ENCODE measurements at regions of chr16 and their contacts with region 1.

Region 1: GRCh38 chr16:77675464-77676324 is 46.6 kb upstream of the NUDT7 start:
- DNase-seq: peak; percentile 74
- ATAC-seq: peak; percentile 57
- H3K4me3 ChIP-seq: no peak overlapping the region
- H3K4me3 Mint-ChIP-seq: no peak overlapping the region
- H3K27ac ChIP-seq: no peak overlapping the region
- H3K27ac Mint-ChIP-seq: no peak overlapping the region
- H3K4me1 ChIP-seq: peaks cover 0 to 3% of the 10 kb centered on the region in 2 donors
- H3K4me1 Mint-ChIP-seq: peaks cover 6% of the 10 kb centered on the region
- H3K27me3 ChIP-seq: no peaks in the 10 kb centered on the region
- H3K27me3 Mint-ChIP-seq: no peaks in the 10 kb centered on the region
- CTCF ChIP-seq: peak; percentile 95

Region 2: GRCh38 chr16:77556201-77556873 is 119.4 kb before region 1 on chr16:
- CTCF ChIA-PET with region 1: no interaction called
- POLR2A ChIA-PET with region 1: no interaction called
- intact Hi-C with region 1: no loop called
- DNase-seq: no peak
- ATAC-seq: no peak
- H3K4me3 ChIP-seq: no peak overlapping the region
- H3K4me3 Mint-ChIP-seq: no peak overlapping the region
- H3K27ac ChIP-seq: no peak overlapping the region
- H3K27ac Mint-ChIP-seq: no peak overlapping the region
- H3K4me1 ChIP-seq: no peaks in the 10 kb centered on the region
- H3K4me1 Mint-ChIP-seq: no peaks in the 10 kb centered on the region
- H3K27me3 ChIP-seq: peaks cover 0 to 2% (median 0%) of the 10 kb centered on the region in 4 experiments
- H3K27me3 Mint-ChIP-seq: peaks cover 12% of the 10 kb centered on the region
- CTCF ChIP-seq: no peak

Region 3: DNA sequence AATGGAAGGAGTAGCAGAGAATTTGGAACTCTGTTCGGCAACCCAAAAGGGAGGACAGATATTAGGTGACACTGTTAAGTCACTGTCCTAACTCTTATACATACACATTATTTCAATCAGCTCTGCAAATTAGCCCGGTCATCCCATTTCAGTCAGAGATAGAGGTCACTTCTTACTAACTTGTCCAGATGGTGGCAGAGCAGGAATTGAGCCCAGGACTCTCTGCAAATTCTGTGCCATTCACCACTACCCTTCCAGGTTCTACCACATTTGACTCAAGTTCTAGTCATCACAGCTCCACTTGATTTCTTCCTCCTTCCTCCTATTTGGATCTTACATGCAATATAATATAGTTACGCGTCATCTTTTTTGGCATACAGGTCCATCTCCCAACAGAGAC is 10.7 kb after region 1 on chr16:
- CTCF ChIA-PET with region 1: interaction called, 15 read pairs
- POLR2A ChIA-PET with region 1: no interaction called
- intact Hi-C with region 1: no loop called
- DNase-seq: no peak
- ATAC-seq: no peak
- H3K4me3 ChIP-seq: no peak overlapping the region
- H3K4me3 Mint-ChIP-seq: no peak overlapping the region
- H3K27ac ChIP-seq: no peak overlapping the region
- H3K27ac Mint-ChIP-seq: no peak overlapping the region
- H3K4me1 ChIP-seq: no peaks in the 10 kb centered on the region
- H3K4me1 Mint-ChIP-seq: no peaks in the 10 kb centered on the region
- H3K27me3 ChIP-seq: no peaks in the 10 kb centered on the region
- H3K27me3 Mint-ChIP-seq: peaks cover 21% of the 10 kb centered on the region
- CTCF ChIP-seq: no peak

Region 4: GRCh38 chr16:77722309-77723107 is 46.8 kb after region 1 on chr16 and contains the start of gene NUDT7:
- CTCF ChIA-PET with region 1: interaction called, 4 read pairs
- POLR2A ChIA-PET with region 1: no interaction called
- intact Hi-C with region 1: loop called (anchors 1 kb)
- DNase-seq: peak; percentile 96
- ATAC-seq: peak; percentile 97
- H3K4me3 ChIP-seq: peak within 1 kb of the TSS; percentile 49 to 90 (median 87)
- H3K4me3 Mint-ChIP-seq: peak within 1 kb of the TSS; percentile 85
- H3K27ac ChIP-seq: peak within 1 kb of the TSS; percentile 52 to 66
- H3K27ac Mint-ChIP-seq: peak within 1 kb of the TSS; percentile 77
- H3K4me1 ChIP-seq: peaks cover 10 to 15% of the 10 kb centered on the region in 2 donors
- H3K4me1 Mint-ChIP-seq: peaks cover 10% of the 10 kb centered on the region
- H3K27me3 ChIP-seq: no peaks in the 10 kb centered on the region
- H3K27me3 Mint-ChIP-seq: no peaks in the 10 kb centered on the region
- CTCF ChIP-seq: no peak
- total RNA-seq, gene NUDT7: 4.6 and 8.4 TPM in 2 replicates

Region 5: GRCh38 chr16:77971306-77972271 is 295.9 kb after region 1 on chr16:
- CTCF ChIA-PET with region 1: interaction called, 65 read pairs
- POLR2A ChIA-PET with region 1: no interaction called
- intact Hi-C with region 1: no loop called
- DNase-seq: peak; percentile 73
- ATAC-seq: peak; percentile 31
- H3K4me3 ChIP-seq: no peak overlapping the region
- H3K4me3 Mint-ChIP-seq: no peak overlapping the region
- H3K27ac ChIP-seq: no peak overlapping the region
- H3K27ac Mint-ChIP-seq: no peak overlapping the region
- H3K4me1 ChIP-seq: no peaks in the 10 kb centered on the region
- H3K4me1 Mint-ChIP-seq: no peaks in the 10 kb centered on the region
- H3K27me3 ChIP-seq: no peaks in the 10 kb centered on the region
- H3K27me3 Mint-ChIP-seq: peaks cover 3% of the 10 kb centered on the region
- CTCF ChIP-seq: peak; percentile 78

Region 6: GRCh38 chr16:78002915-78003538 is 327.3 kb after region 1 on chr16:
- CTCF ChIA-PET with region 1: interaction called, 41 read pairs
- POLR2A ChIA-PET with region 1: no interaction called
- intact Hi-C with region 1: loop called (anchors 1 kb)
- DNase-seq: peak; percentile 66
- ATAC-seq: peak; percentile 70
- H3K4me3 ChIP-seq: no peak overlapping the region
- H3K4me3 Mint-ChIP-seq: no peak overlapping the region
- H3K27ac ChIP-seq: no peak overlapping the region
- H3K27ac Mint-ChIP-seq: no peak overlapping the region
- H3K4me1 ChIP-seq: no peaks in the 10 kb centered on the region
- H3K4me1 Mint-ChIP-seq: no peaks in the 10 kb centered on the region
- H3K27me3 ChIP-seq: no peaks in the 10 kb centered on the region
- H3K27me3 Mint-ChIP-seq: peaks cover 11% of the 10 kb centered on the region
- CTCF ChIP-seq: peak; percentile 79

Region 7: DNA sequence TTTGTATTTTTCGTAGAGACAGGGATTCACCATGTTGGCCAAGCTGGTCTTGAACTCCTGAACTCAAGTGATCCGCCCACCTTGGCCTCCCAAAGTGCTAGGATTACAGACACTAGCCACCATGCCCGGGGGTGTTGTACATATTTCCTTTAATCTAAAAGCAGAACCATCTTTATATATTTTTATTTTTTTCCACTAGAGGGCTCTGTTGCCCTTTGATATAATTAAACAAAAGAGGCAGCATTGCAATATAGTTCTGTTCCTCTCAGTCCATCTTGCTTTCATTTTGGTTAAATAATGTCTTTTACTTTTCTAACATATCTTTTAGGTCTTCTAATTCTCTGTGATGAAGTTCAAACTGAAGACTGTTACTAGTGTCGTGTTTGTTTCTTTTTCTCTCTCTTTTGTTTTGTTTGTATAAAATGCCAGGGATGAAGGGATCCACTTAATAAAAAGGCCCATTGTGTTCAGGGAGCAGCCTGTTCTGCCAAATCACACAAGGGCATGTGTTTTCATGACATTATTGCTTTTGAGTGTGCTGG is 447.2 kb after region 1 on chr16:
- CTCF ChIA-PET with region 1: no interaction called
- POLR2A ChIA-PET with region 1: no interaction called
- intact Hi-C with region 1: no loop called
- DNase-seq: peak; percentile 65
- ATAC-seq: peak; percentile 58
- H3K4me3 ChIP-seq: no peak overlapping the region
- H3K4me3 Mint-ChIP-seq: no peak overlapping the region
- H3K27ac ChIP-seq: no peak overlapping the region
- H3K27ac Mint-ChIP-seq: no peak overlapping the region
- H3K4me1 ChIP-seq: no peaks in the 10 kb centered on the region
- H3K4me1 Mint-ChIP-seq: peaks cover 2% of the 10 kb centered on the region
- H3K27me3 ChIP-seq: no peaks in the 10 kb centered on the region
- H3K27me3 Mint-ChIP-seq: no peaks in the 10 kb centered on the region
- CTCF ChIP-seq: peak; percentile 78

Measured in B cell (primary cell).